GM23248 (cell line): ENCODE measurements at regions of chr6 and their contacts with region 1.

Region 1: DNA sequence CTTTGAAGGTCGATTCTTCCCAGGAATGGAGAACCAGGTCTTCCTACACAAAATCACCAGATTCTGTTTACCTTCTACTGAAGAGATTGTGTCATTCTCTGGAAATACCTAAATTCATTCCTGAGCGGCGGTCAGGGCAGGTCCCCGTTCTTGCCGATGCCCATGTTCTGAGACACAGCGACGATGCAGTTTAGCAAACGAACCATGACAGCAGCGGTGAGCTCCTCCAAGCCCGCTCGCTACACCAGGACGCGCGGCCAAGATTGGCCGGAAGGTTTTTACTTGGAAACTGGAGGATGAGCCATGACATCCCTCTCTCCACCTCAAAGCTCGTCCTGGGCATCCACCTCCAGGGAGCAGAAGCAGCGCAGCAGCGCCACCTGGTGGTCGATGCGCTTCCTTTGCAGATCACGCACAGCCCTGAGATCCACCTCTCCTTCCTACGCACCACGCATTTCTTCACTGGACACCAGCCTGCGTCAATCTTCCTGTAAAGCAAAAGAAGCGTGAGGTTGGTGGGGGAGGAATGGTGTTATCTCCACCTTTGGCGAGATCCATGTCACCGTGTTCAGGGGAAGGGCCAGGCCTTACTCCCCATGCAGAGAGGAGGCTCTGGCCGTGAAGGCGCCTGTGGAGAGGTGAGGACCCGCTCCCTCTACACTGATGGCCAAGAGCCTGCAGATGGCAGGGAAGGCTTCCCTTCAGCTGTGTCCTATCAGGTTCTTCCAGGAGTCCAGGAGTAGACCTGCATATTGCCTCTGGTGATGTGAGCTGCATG is 9.9 kb upstream of the HLA-B start:
- DNase-seq: peak; percentile 91
- H3K4me3 ChIP-seq: peak overlapping the region; percentile 38; the same call in 1 of the 2 replicates
- H3K27ac ChIP-seq: no peak overlapping the region
- H3K4me1 ChIP-seq: no peaks in the 10 kb centered on the region
- H3K27me3 ChIP-seq: peaks cover 41% of the 10 kb centered on the region

Region 2: GRCh38 chr6:29748391-29749307 is 1618.2 kb before region 1 on chr6:
- in situ Hi-C with region 1: no loop called
- DNase-seq: peak; percentile 94
- H3K4me3 ChIP-seq: peak overlapping the region; percentile 85
- H3K27ac ChIP-seq: no peak overlapping the region
- H3K4me1 ChIP-seq: peaks cover 6% of the 10 kb centered on the region; the same call in 1 of the 2 replicates
- H3K27me3 ChIP-seq: no peaks in the 10 kb centered on the region

Region 3: DNA sequence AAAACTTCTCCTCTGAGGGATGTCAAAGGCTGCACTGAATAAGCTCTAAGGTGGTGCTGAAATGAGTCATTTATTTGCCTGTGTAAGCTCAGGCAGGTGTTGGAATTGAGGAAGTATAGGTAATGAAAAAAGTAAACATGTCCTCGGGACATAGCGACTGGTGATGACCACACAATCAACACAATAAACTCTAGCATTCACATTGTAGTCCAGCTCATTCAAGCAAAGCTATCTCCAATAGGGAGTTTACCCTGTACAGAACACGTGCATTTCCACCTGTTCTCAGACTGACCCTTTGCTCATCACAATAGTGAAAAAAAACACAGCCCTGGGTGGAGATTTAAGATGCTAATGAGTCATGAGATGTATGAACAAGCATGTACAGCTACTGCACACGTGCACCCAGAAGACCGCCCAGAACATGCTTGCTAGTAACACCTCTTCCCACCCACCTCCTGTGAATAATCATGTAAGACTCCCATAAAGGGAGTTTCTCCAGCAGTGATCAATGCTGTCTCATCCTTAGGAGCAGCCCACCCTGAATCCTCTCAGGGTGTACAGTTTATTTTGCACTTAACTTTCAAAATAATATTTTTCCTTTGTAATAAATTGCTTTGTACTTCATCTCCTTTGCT is 163.4 kb before region 1 on chr6:
- in situ Hi-C with region 1: loop called (anchors 10 kb)
- DNase-seq: peak; percentile 94
- H3K4me3 ChIP-seq: peak overlapping the region; percentile 73
- H3K27ac ChIP-seq: peak overlapping the region; percentile 76
- H3K4me1 ChIP-seq: peaks cover 12% of the 10 kb centered on the region
- H3K27me3 ChIP-seq: no peaks in the 10 kb centered on the region

Region 4: GRCh38 chr6:31243508-31243907 is 123.4 kb before region 1 on chr6:
- in situ Hi-C with region 1: no loop called
- DNase-seq: no peak
- H3K4me3 ChIP-seq: no peak overlapping the region
- H3K27ac ChIP-seq: no peak overlapping the region
- H3K4me1 ChIP-seq: peaks cover 7% of the 10 kb centered on the region; the same call in 1 of the 2 replicates
- H3K27me3 ChIP-seq: peaks cover 11% of the 10 kb centered on the region; the same call in 1 of the 2 replicates

Region 5: GRCh38 chr6:31784098-31784925 is 417.4 kb after region 1 on chr6:
- in situ Hi-C with region 1: no loop called
- DNase-seq: no peak
- H3K4me3 ChIP-seq: no peak overlapping the region
- H3K27ac ChIP-seq: no peak overlapping the region
- H3K4me1 ChIP-seq: no peaks in the 10 kb centered on the region
- H3K27me3 ChIP-seq: no peaks in the 10 kb centered on the region

Region 6: DNA sequence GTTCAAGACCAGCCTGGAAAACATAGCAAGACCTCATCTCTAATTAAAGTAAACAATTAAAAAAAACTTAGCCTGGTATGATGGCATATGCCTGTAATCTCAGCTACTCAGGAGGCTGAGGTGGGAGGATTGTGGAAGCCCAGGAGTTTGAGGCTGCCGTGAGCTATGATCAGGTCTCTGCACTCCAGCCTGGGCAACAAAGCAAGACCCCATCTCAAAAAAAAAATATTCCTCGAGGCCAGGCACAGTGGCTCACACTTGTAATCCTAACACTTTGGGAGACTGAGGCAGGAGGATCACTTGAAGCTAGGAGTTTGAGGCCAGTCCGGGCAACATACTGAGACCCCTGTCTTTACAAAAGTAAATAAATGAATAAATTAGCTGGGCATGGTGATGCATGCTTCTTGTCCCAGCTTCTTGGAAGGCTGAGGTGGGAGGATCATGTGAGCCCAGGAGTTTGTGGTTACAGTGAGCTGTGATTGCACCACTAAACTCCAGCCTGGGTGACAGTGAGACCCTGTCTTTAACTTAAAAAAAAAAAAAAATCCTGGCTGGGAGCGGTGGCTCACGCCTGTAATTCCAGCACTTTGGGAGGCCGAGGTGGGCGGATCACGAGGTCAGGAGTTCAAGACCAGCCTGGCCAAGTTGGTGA is 551.3 kb after region 1 on chr6:
- in situ Hi-C with region 1: no loop called
- DNase-seq: peak; percentile 36
- H3K4me3 ChIP-seq: no peak overlapping the region
- H3K27ac ChIP-seq: no peak overlapping the region
- H3K4me1 ChIP-seq: no peaks in the 10 kb centered on the region
- H3K27me3 ChIP-seq: no peaks in the 10 kb centered on the region